ENCODE measurements at regions of chr1 and their contacts with region 1.

Region 1: GRCh38 chr1:154627257-154628120 is 19.5 kb upstream of the ADAR start:
- DNase-seq: peak; percentile 95
- ATAC-seq: peak; percentile 80

Region 2: GRCh38 chr1:154524881-154525280 is 102.6 kb before region 1 on chr1:
- intact Hi-C with region 1: no loop called
- DNase-seq: no peak
- ATAC-seq: no peak

Region 3: GRCh38 chr1:154607609-154608396 is 19.7 kb before region 1 on chr1 and contains the start of gene ADAR:
- intact Hi-C with region 1: loop called (anchors 2 kb)
- DNase-seq: peak; percentile 95
- ATAC-seq: peak; percentile 91
- total RNA-seq, gene ADAR: 52.8 TPM

Measured in Right ventricle myocardium inferior (tissue), 1 donor.